ENCODE measurements at regions of chr11 and their contacts with region 1.

Region 1: DNA sequence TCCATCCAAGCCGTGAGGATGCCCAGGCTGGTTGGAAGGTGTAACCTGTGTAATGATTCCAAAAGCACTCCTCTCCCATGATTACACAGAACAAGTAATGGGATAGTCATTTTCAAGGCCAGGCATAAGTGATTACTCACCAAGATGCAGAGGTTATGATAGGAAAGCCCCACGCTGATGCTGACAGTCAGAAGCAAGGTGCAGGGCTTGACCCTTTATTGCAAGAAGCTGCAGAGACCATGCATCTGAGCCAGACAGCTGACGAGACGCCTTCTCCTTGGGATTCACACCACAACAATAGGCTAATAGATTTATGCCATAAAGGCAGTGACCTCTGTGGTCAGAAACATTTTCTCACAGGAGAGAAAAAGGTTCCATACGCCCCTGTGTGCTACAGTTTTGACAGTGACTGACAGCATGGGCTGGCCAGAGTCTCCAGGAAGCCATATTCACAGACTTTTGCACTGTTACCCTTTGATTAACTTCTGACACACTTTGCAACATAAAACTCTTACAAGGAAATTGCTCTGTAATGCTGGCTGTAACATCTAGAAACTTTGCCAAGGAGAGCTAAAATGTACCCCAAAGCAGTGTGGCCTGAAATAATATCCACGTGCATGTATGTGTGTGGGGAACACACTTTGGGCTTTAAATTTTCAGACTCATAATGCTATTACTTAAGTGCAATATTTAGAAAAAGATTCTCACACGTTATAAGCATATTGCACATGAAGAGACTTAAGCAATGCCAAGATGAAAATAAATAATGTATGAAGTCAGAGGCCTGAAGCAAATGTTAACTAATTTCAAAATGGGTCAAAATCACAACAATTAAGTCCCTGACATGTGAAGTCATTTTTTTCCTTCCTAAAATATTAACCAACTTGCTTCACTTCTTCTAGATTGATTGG is 1079.0 kb upstream of the TENM4 start:
- DNase-seq: no peak
- ATAC-seq: no peak
- H3K4me3 ChIP-seq: no peak overlapping the region
- H3K27ac ChIP-seq: no peak overlapping the region
- H3K4me1 ChIP-seq: no peaks in the 10 kb centered on the region
- H3K27me3 ChIP-seq: no peaks in the 10 kb centered on the region
- CTCF ChIP-seq: no peak
- POLR2A ChIP-seq: no peak

Region 2: GRCh38 chr11:80505771-80506170 is 14.1 kb before region 1 on chr11:
- intact Hi-C with region 1: loop called in 1 of 10 experiments (anchors 1 kb)
- DNase-seq: no peak
- ATAC-seq: no peak
- H3K4me3 ChIP-seq: no peak overlapping the region
- H3K27ac ChIP-seq: no peak overlapping the region
- H3K4me1 ChIP-seq: no peaks in the 10 kb centered on the region
- H3K27me3 ChIP-seq: no peaks in the 10 kb centered on the region
- CTCF ChIP-seq: no peak
- POLR2A ChIP-seq: no peak